ENCODE measurements at regions of chr19 and their contacts with region 1.

Region 1: DNA sequence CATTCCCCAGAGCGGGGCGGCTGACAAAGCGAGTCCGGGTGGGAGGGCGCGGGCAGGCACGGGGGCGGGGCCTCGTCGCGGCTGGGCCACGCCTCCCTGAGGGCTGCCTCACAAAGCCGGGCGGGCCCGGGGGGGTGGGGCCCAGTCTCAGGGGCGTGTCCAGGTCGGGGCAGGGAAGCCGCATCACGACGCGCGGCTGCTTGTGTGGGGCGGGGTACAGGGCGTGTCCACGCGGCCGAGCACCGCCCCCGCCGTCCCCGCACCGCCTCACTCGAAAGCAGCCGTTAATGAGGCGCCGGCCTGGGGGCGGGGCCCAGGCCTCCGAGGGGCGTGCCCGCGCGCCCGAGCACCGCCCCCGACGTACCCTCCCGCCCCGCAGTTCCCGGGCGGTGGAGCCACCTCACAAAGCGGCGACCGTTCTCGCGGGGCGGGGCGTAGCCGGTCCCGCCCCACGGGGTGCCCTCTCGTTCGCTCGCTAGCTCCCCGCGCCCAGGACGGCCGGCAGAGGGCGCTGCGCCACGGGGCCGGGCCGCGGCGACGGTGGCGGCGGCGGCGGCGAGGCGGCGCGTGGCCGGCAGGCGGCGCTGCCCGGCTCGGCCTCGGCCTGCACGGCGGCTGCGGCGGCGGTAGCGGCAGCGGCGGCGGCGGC is at the start of gene CARM1:
- DNase-seq: peak; percentile 97
- H3K4me3 ChIP-seq: peak within 1 kb of the TSS; percentile 84
- H3K27ac ChIP-seq: peak within 1 kb of the TSS; percentile 61
- H3K27me3 ChIP-seq: no peaks in the 10 kb centered on the region
- CTCF ChIP-seq: peak; percentile 49
- polyA plus RNA-seq, gene CARM1: 23.5 and 26.0 TPM in 2 replicates

Region 2: GRCh38 chr19:10800488-10800887 is 70.6 kb before region 1 on chr19:
- CTCF ChIA-PET with region 1: no interaction called
- POLR2A ChIA-PET with region 1: no interaction called
- DNase-seq: no peak
- H3K4me3 ChIP-seq: no peak overlapping the region
- H3K27ac ChIP-seq: no peak overlapping the region
- H3K27me3 ChIP-seq: no peaks in the 10 kb centered on the region
- CTCF ChIP-seq: no peak

Region 3: GRCh38 chr19:10858204-10858828 is 12.8 kb before region 1 on chr19:
- CTCF ChIA-PET with region 1: interaction called, 116 read pairs
- POLR2A ChIA-PET with region 1: interaction called, 3 read pairs
- DNase-seq: no peak
- H3K4me3 ChIP-seq: no peak overlapping the region
- H3K27ac ChIP-seq: no peak overlapping the region
- H3K27me3 ChIP-seq: no peaks in the 10 kb centered on the region
- CTCF ChIP-seq: peak; percentile 86

Region 4: GRCh38 chr19:10884274-10884673 is 13.2 kb after region 1 on chr19:
- CTCF ChIA-PET with region 1: interaction called, 23 read pairs
- POLR2A ChIA-PET with region 1: no interaction called
- DNase-seq: no peak
- H3K4me3 ChIP-seq: no peak overlapping the region
- H3K27ac ChIP-seq: peak overlapping the region; percentile 39
- H3K27me3 ChIP-seq: no peaks in the 10 kb centered on the region
- CTCF ChIP-seq: no peak

Region 5: GRCh38 chr19:10891405-10892086 is 20.5 kb after region 1 on chr19:
- CTCF ChIA-PET with region 1: interaction called, 23 read pairs
- POLR2A ChIA-PET with region 1: interaction called, 4 read pairs
- DNase-seq: no peak
- H3K4me3 ChIP-seq: no peak overlapping the region
- H3K27ac ChIP-seq: no peak overlapping the region
- H3K27me3 ChIP-seq: no peaks in the 10 kb centered on the region
- CTCF ChIP-seq: no peak

Region 6: DNA sequence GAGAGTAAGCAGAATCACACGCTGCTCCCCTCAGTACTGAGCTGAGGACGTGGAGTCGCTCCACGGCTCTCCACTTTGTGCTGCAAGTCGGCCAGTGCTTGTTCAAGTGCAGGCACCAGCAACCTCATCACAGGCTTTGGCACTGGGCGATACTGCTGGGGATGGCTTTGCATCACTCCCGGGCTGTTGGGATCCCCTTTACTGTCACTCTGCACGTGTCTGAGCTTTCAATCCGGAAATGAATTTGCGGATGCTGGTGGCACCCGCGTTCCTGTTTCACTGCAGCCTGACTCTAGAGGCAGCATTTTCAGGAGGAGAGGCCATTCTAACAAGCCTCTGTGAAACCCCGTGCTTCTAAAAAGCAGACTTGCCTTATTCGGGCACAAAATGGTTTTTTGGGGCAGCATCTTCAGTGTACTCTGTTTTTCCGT is 108.9 kb after region 1 on chr19:
- CTCF ChIA-PET with region 1: interaction called, 12 read pairs
- POLR2A ChIA-PET with region 1: no interaction called
- DNase-seq: no peak
- H3K4me3 ChIP-seq: no peak overlapping the region
- H3K27ac ChIP-seq: no peak overlapping the region
- H3K27me3 ChIP-seq: no peaks in the 10 kb centered on the region
- CTCF ChIP-seq: no peak